GM12878 (cell line): ENCODE measurements at regions of chr1 and their contacts with region 1.

Region 1: DNA sequence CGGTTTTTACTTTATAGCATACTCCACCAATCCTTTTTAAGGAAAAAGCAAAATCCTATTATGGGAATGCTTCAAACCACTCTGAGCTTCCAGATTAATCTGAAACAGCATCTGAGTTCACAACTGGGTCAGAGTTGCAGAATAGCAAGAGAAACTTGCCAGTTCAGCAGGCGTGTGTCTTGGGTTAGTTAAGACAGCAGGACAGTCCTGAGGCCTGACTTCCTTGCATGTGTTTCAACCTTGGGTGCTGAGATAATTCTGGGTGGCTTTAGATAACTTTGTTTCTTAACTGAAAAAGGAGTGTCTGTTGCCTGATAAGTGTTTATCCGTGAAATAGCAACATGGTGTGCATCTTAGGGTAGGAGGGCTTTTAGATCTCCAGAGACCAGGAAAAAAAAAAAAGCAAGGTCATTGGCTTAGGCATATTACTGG is 169.2 kb downstream of the DHRS3 start:
- DNase-seq: no peak
- ATAC-seq: peak; percentile 46
- H3K4me3 ChIP-seq: no peak overlapping the region
- H3K27ac ChIP-seq: no peak overlapping the region
- H3K4me1 ChIP-seq: peaks cover 23% of the 10 kb centered on the region
- H3K27me3 ChIP-seq: no peaks in the 10 kb centered on the region
- CTCF ChIP-seq: no peak
- EP300 ChIP-seq: no peak
- POLR2A ChIP-seq: no peak
- RAD21 ChIP-seq: no peak

Region 2: DNA sequence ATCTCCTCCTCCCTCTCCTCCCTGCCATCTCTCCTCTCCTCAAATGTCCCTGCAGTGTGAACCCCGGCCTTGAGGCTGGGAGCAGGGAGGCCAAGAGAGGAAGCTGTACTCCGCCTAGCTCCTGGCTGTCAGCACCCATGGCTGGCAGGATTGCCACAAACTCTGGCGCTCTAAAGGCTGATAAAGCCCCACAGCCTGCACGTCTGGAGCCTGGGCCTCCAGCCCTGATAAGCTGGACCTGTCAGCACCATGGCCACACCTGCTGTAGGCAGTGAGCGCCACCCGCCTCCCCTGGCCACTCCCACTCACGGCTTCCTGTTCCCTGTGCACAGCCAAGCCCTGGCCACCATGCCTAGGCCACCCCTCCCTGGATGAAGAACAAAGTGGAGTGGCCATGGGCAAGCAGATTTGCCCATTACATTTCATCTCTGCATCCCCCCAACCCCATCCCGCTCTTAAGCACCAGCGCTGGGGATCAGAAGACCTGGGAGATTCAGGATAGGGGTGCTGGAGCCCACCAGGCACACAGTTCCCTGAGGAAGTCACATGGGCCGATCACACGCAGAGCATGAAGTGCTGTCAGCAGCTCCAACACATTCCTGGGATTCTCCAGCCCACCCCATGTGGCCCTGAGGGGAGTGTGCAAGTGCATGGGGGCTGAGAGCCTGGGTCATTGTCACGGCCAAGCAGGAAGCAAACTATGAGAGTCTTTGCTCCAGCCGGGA is 565.8 kb before region 1 on chr1:
- CTCF ChIA-PET with region 1: no interaction called
- POLR2A ChIA-PET with region 1: no interaction called
- RAD21 ChIA-PET with region 1: no interaction called
- SMC1A ChIA-PET with region 1: no interaction called
- in situ Hi-C with region 1: no loop called
- intact Hi-C with region 1: no loop called
- DNase-seq: no peak
- ATAC-seq: peak; percentile 71
- H3K4me3 ChIP-seq: no peak overlapping the region
- H3K27ac ChIP-seq: no peak overlapping the region
- H3K4me1 ChIP-seq: no peaks in the 10 kb centered on the region
- H3K27me3 ChIP-seq: no peaks in the 10 kb centered on the region; a peak in 1 of 4 replicates
- CTCF ChIP-seq: no peak
- EP300 ChIP-seq: no peak
- POLR2A ChIP-seq: no peak
- RAD21 ChIP-seq: no peak

Region 3: DNA sequence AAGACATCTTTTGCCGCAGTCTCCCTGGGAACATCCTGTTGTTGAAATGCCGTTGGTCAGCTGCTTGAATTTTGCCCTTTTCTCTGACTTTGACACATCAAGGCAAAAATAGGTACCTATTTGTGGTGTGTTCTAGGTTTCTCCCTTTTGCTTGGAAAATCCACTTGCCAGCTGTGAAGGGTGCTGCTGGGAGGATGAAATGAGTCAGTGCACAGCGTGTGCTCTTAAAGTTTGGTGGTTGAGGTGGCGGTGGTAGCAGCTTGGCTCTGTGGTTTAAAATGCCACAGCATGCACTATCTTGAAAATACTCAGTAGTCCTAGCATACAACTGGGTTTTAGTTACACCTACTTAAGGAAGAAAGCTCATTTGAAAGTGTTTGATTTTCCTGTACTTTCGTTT is 14.6 kb before region 1 on chr1:
- CTCF ChIA-PET with region 1: interaction called, 10 read pairs
- POLR2A ChIA-PET with region 1: interaction called, 3 read pairs
- RAD21 ChIA-PET with region 1: interaction called, 14 read pairs
- SMC1A ChIA-PET with region 1: interaction called, 74 read pairs
- in situ Hi-C with region 1: no loop called
- intact Hi-C with region 1: loop called (anchors 1 kb)
- DNase-seq: peak; percentile 73
- ATAC-seq: peak; percentile 53
- H3K4me3 ChIP-seq: no peak overlapping the region
- H3K27ac ChIP-seq: no peak overlapping the region
- H3K4me1 ChIP-seq: peaks cover 41% of the 10 kb centered on the region
- H3K27me3 ChIP-seq: no peaks in the 10 kb centered on the region
- CTCF ChIP-seq: no peak
- EP300 ChIP-seq: no peak; a peak in 2 of 4 replicates
- POLR2A ChIP-seq: no peak
- RAD21 ChIP-seq: no peak

Region 4: DNA sequence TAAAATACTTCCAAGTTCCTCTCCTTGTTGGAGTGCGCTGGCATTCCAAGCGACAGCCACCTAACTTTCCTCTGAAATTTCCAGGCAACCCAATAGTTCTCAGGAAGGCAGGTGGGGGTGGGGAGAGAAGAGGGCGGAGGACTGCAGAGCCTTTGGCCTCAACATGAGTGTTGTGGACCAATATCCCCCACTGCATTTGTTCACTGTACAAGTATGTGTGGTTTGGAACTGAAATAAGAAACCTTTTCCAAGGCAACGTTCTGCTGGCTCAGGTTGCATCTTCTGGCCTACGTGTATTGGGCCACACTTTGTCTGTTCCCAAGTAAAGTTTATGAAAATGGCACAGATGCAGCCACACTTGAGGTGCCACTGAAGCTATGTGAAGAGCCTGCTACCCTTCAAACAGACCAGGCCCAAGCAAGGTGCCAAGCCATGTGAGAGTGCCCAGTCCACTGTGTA is 15.9 kb after region 1 on chr1:
- CTCF ChIA-PET with region 1: no interaction called
- POLR2A ChIA-PET with region 1: no interaction called
- RAD21 ChIA-PET with region 1: no interaction called
- SMC1A ChIA-PET with region 1: no interaction called
- in situ Hi-C with region 1: no loop called
- intact Hi-C with region 1: no loop called
- DNase-seq: no peak
- ATAC-seq: no peak
- H3K4me3 ChIP-seq: no peak overlapping the region
- H3K27ac ChIP-seq: no peak overlapping the region
- H3K4me1 ChIP-seq: no peaks in the 10 kb centered on the region
- H3K27me3 ChIP-seq: no peaks in the 10 kb centered on the region
- CTCF ChIP-seq: no peak
- EP300 ChIP-seq: no peak
- POLR2A ChIP-seq: no peak
- RAD21 ChIP-seq: no peak

Region 5: DNA sequence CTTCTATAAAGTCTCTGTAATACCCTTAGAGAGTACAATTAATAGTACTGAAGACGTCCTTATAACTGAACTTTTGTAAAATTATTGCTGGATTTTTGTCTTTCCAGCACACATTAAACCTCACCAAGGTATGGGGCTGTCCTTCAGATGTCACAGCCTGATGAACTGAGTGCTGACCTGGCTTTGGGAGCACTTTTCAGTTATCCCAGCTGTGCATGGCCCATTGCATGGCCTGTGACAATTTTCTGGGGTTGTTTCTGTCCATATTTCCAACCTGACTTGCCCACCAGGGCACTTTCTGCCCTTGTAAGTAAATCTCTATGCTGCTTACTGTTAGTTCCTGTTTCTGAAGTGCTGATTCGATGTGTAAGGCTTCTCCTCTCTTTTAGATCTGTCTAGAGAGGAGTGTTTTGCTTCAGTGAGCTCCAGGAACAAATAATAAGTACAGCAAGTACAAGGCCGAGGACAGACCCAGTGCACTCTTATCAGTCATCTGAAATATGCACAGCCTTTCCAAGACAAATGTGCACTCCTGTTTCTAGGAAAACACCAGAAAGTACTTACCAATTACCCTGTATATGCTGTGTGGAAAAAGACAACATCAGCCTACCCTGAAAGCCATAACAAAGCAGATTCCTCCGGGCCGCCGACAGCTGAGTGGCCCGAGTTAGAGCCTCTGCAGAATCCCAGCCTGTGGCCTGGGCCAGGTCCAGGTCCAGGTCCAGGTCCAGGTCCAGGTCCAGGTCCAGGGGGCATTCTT is 47.6 kb after region 1 on chr1:
- CTCF ChIA-PET with region 1: no interaction called
- POLR2A ChIA-PET with region 1: no interaction called
- RAD21 ChIA-PET with region 1: no interaction called
- SMC1A ChIA-PET with region 1: no interaction called
- in situ Hi-C with region 1: no loop called
- intact Hi-C with region 1: no loop called
- DNase-seq: no peak
- ATAC-seq: no peak
- H3K4me3 ChIP-seq: no peak overlapping the region
- H3K27ac ChIP-seq: no peak overlapping the region
- H3K4me1 ChIP-seq: no peaks in the 10 kb centered on the region
- H3K27me3 ChIP-seq: no peaks in the 10 kb centered on the region
- CTCF ChIP-seq: no peak
- EP300 ChIP-seq: no peak
- POLR2A ChIP-seq: no peak
- RAD21 ChIP-seq: no peak

Region 6: GRCh38 chr1:12604114-12604874 is 155.5 kb after region 1 on chr1:
- CTCF ChIA-PET with region 1: interaction called, 3 read pairs
- POLR2A ChIA-PET with region 1: no interaction called
- RAD21 ChIA-PET with region 1: no interaction called
- SMC1A ChIA-PET with region 1: no interaction called
- in situ Hi-C with region 1: no loop called
- intact Hi-C with region 1: loop called (anchors 5 kb)
- DNase-seq: no peak
- ATAC-seq: peak; percentile 84
- H3K4me3 ChIP-seq: no peak overlapping the region
- H3K27ac ChIP-seq: no peak overlapping the region
- H3K4me1 ChIP-seq: no peaks in the 10 kb centered on the region
- H3K27me3 ChIP-seq: no peaks in the 10 kb centered on the region; a peak in 1 of 4 replicates
- CTCF ChIP-seq: no peak
- EP300 ChIP-seq: no peak
- POLR2A ChIP-seq: no peak
- RAD21 ChIP-seq: no peak